B cell (primary cell): ENCODE measurements at regions of chr5 and their contacts with region 1.

Region 1: GRCh38 chr5:172833686-172834414 is at the start of gene ERGIC1:
- DNase-seq: peak; percentile 86
- ATAC-seq: peak; percentile 74
- H3K4me3 ChIP-seq: peak within 1 kb of the TSS; percentile 62 to 90 (median 69)
- H3K4me3 Mint-ChIP-seq: peak within 1 kb of the TSS; percentile 90
- H3K27ac ChIP-seq: peak within 1 kb of the TSS; percentile 95 to 98
- H3K27ac Mint-ChIP-seq: peak within 1 kb of the TSS; percentile 96
- H3K4me1 ChIP-seq: peaks cover 42 to 52% of the 10 kb centered on the region in 2 donors
- H3K4me1 Mint-ChIP-seq: peaks cover 48% of the 10 kb centered on the region
- H3K27me3 ChIP-seq: no peaks in the 10 kb centered on the region
- H3K27me3 Mint-ChIP-seq: no peaks in the 10 kb centered on the region
- CTCF ChIP-seq: no peak
- total RNA-seq, gene ERGIC1: 132 and 140 TPM in 2 replicates

Region 2: DNA sequence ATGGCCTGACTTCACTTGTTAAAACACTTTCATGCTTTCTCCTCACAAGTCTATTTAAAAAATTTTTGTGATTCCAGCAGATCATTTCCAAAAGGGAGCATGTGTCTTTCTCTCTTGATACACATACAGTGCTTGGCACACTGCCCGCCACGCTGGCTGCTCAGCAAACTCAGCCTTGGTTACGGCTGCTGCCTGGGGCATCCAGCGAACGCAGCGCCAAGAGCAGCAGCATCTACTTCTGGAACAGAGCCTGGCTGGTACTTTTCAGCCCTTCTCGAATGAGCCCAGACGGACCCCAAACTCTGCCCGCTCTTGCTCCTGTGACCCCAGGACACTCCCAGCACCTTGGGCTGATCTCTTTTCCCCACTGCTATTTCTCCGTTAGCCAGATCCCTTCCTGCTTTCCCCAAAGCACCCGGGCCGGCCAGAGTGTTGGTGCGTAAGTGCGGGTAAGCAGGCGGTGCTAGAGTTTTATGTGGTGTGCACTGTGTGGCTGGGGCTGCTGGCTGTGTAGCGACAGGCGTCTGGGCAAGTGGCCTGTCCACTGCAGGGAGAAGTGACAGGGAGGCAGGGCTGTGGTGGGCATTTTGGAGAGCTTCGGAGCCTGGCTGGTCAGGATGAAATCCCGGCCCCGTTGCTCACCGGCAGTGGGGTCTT is 452.7 kb before region 1 on chr5:
- CTCF ChIA-PET with region 1: no interaction called
- POLR2A ChIA-PET with region 1: no interaction called
- intact Hi-C with region 1: no loop called
- DNase-seq: no peak
- ATAC-seq: no peak
- H3K4me3 ChIP-seq: no peak overlapping the region
- H3K4me3 Mint-ChIP-seq: no peak overlapping the region
- H3K27ac ChIP-seq: no peak overlapping the region
- H3K27ac Mint-ChIP-seq: no peak overlapping the region
- H3K4me1 ChIP-seq: no peaks in the 10 kb centered on the region
- H3K4me1 Mint-ChIP-seq: no peaks in the 10 kb centered on the region
- H3K27me3 ChIP-seq: no peaks in the 10 kb centered on the region
- H3K27me3 Mint-ChIP-seq: peaks cover 2% of the 10 kb centered on the region
- CTCF ChIP-seq: no peak

Region 3: DNA sequence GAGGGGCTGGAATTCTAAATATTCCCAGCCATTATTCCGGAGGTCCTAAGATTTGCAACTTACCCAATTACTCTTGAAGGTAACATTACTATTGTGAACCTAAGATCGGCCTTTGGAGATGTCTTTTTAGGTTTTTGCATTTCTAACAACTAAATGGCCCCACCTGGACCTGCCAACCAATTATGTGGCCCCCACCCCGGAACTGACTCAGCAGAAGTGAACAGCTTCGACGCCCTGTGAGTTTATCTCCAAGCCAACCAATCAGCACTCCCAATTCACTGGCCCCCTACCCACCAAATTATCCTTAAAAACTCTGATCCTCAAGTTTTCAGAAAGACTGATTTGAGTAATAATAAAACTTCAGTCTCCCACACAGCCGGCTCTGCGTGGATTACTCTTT is 129.9 kb before region 1 on chr5:
- CTCF ChIA-PET with region 1: no interaction called
- POLR2A ChIA-PET with region 1: no interaction called
- intact Hi-C with region 1: no loop called
- DNase-seq: no peak
- ATAC-seq: no peak
- H3K4me3 ChIP-seq: no peak overlapping the region
- H3K4me3 Mint-ChIP-seq: no peak overlapping the region
- H3K27ac ChIP-seq: no peak overlapping the region
- H3K27ac Mint-ChIP-seq: no peak overlapping the region
- H3K4me1 ChIP-seq: peaks cover 8 to 9% of the 10 kb centered on the region in 2 donors
- H3K4me1 Mint-ChIP-seq: peaks cover 7% of the 10 kb centered on the region
- H3K27me3 ChIP-seq: peaks cover 0 to 41% (median 19%) of the 10 kb centered on the region in 4 experiments
- H3K27me3 Mint-ChIP-seq: peaks cover 65% of the 10 kb centered on the region
- CTCF ChIP-seq: no peak

Region 4: GRCh38 chr5:172764849-172765765 is 68.7 kb before region 1 on chr5:
- CTCF ChIA-PET with region 1: interaction called, 60 read pairs
- POLR2A ChIA-PET with region 1: interaction called, 52 read pairs
- intact Hi-C with region 1: loop called (anchors 1 kb)
- DNase-seq: peak; percentile 99
- ATAC-seq: peak; percentile 78
- H3K4me3 ChIP-seq: peak overlapping the region; percentile 27 to 74 (median 52)
- H3K4me3 Mint-ChIP-seq: peak overlapping the region; percentile 83
- H3K27ac ChIP-seq: peak overlapping the region; percentile 92 to 94
- H3K27ac Mint-ChIP-seq: peak overlapping the region; percentile 94
- H3K4me1 ChIP-seq: peaks cover 33 to 42% of the 10 kb centered on the region in 2 donors
- H3K4me1 Mint-ChIP-seq: peaks cover 59% of the 10 kb centered on the region
- H3K27me3 ChIP-seq: no peaks in the 10 kb centered on the region
- H3K27me3 Mint-ChIP-seq: no peaks in the 10 kb centered on the region
- CTCF ChIP-seq: no peak

Region 5: DNA sequence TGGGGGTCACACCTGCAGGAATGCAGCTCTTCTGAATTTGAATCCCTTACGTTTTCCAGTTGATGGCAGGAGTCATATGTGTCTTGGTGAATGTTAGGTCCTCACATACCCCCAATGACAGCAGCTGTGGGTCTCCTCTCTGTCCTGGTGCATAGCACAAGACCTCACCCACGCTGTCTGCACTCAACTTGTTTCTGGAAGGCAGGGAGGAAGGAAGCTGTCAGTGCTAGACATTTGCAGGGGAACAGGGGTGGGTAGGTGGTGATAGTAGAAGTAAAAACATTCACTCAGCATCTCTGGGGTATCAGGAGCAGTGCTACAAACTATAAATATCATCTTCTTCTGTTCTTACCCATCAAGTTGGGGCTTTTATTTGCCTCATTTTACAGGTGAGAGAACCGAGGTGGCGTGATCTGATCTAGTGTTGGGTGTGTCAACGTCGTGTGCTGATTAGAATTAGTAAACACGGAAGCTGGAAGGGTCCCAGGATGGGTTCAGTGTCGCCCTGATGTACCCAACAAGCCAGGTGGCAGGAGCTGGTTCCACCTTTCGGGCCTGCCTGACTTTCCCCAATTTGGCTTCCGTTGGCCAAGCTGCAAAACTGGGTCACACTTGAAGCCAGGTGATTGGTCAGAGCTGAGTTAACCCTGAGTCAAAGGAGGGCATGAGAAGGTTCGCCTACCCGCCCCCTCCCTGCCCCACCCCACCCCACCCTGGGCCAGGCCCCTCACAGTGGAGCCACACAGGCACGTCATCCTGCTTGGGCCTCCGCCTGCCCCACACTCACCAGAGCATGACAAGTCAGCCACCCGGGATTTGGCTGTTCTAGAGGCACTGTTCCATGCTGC is 16.0 kb after region 1 on chr5:
- CTCF ChIA-PET with region 1: interaction called, 13 read pairs
- POLR2A ChIA-PET with region 1: interaction called, 15 read pairs
- intact Hi-C with region 1: loop called (anchors 1 kb)
- DNase-seq: peak; percentile 93
- ATAC-seq: peak; percentile 84
- H3K4me3 ChIP-seq: peak overlapping the region in 4 of 5 experiments; percentile 11 to 40 (median 20)
- H3K4me3 Mint-ChIP-seq: peak overlapping the region; percentile 73
- H3K27ac ChIP-seq: peak overlapping the region; percentile 88 to 95
- H3K27ac Mint-ChIP-seq: peak overlapping the region; percentile 95
- H3K4me1 ChIP-seq: peaks cover 61 to 74% of the 10 kb centered on the region in 2 donors
- H3K4me1 Mint-ChIP-seq: peaks cover 80% of the 10 kb centered on the region
- H3K27me3 ChIP-seq: no peaks in the 10 kb centered on the region
- H3K27me3 Mint-ChIP-seq: no peaks in the 10 kb centered on the region
- CTCF ChIP-seq: no peak

Region 6: DNA sequence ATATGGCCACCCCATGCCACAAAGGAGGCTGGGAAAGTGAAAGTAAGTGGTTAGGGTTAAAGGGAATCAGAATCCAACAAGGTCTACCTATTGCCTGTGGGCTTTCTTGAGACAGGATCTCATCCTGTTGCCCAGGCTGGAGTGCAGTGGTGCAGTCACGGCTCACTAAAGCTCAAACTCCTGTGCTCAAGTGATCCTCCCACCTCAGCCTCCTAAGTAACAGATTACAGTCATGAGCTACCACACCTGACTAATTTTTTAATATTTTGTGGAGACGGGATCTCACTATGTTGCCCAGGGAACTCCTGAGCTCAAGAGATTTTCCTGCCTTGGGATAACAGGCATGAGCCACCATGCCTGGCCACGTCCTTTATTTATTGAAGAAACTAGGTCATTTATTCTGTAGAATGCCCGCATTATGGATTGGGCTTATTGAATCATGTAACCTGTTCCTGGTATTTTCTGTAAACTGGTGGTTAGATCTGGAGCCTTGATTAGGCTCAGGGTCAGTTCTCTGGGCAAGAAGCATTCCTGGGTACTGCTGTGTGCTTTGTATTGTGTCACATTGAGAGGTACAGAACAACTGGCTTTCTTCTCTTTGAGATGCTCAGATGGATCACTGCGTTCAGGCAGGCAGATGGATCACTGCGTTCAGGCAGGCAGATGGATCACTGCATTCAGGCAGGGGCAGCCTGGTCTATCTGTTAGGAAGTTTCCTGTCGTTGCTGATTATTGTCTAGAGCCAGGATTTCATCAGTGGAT is 41.8 kb after region 1 on chr5:
- CTCF ChIA-PET with region 1: no interaction called
- POLR2A ChIA-PET with region 1: no interaction called
- intact Hi-C with region 1: no loop called
- DNase-seq: no peak
- ATAC-seq: no peak
- H3K4me3 ChIP-seq: no peak overlapping the region
- H3K4me3 Mint-ChIP-seq: no peak overlapping the region
- H3K27ac ChIP-seq: peak overlapping the region in 1 of 2 donors; percentile 34
- H3K27ac Mint-ChIP-seq: peak overlapping the region; percentile 47
- H3K4me1 ChIP-seq: peaks cover 39 to 41% of the 10 kb centered on the region in 2 donors
- H3K4me1 Mint-ChIP-seq: peaks cover 44% of the 10 kb centered on the region
- H3K27me3 ChIP-seq: no peaks in the 10 kb centered on the region
- H3K27me3 Mint-ChIP-seq: no peaks in the 10 kb centered on the region
- CTCF ChIP-seq: no peak

Region 7: DNA sequence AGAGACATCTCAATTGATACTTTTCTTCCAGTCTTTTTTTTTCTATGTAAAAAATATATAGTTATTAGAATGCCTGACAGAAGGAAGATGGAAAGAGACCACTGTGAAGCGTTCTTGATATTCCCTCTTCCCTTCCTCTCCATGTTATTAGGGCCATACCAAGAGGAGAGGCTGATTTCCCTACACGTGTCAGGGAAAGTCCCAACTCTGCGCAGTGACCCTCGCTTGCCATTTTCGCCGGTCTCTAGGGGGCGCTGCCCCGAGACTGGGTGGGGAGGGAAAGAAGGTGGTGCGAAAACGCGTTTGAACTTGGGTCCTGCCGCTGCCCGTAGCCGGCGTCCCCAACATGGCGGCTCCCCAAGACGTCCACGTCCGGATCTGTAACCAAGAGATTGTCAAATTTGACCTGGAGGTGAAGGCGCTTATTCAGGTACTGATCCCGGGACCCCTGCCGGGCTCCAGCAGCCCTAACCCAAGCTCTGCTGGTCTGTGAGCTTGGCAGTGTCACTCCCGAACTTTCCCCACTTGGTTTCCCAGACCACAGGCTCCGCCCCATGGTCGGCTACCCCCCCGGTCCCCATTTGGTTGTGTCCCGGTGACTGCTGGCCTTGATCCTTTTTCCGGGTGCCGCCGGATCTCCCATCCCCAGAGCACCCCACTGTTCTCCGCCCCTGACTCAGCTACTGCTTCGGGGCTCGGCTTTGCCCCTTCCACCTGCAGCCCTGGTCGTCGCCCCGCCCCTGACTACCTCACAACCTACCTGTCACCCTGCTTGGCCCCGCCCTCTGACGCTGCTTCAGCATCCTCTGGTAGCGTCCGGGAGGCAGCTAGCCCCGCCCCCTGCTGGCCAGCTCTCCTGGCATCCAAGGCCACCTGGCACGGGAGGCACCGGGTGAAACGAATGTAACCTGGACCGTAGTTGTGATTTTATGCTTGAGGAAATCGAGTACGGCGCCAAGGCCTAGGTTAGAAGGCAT is 310.6 kb after region 1 on chr5 and contains the start of gene BNIP1:
- CTCF ChIA-PET with region 1: no interaction called
- POLR2A ChIA-PET with region 1: interaction called, 3 read pairs
- intact Hi-C with region 1: loop called (anchors 2 kb)
- DNase-seq: peak; percentile 97
- ATAC-seq: peak; percentile 90
- H3K4me3 ChIP-seq: peak within 1 kb of the TSS; percentile 79 to 100 (median 97)
- H3K4me3 Mint-ChIP-seq: peak within 1 kb of the TSS; percentile 98
- H3K27ac ChIP-seq: peak within 1 kb of the TSS; percentile 90 to 95
- H3K27ac Mint-ChIP-seq: peak within 1 kb of the TSS; percentile 98
- H3K4me1 ChIP-seq: peaks cover 3 to 8% of the 10 kb centered on the region in 2 donors
- H3K4me1 Mint-ChIP-seq: peaks cover 8% of the 10 kb centered on the region
- H3K27me3 ChIP-seq: no peaks in the 10 kb centered on the region
- H3K27me3 Mint-ChIP-seq: no peaks in the 10 kb centered on the region
- CTCF ChIP-seq: peak; percentile 81
- total RNA-seq, gene BNIP1: 8.0 and 10.0 TPM in 2 replicates